Activated CD8-positive, alpha-beta T cell treated with anti-CD3 and anti-CD28 coated beads for 36 hours (primary cell): ENCODE measurements at regions of chr5 and their contacts with region 1.

Region 1: DNA sequence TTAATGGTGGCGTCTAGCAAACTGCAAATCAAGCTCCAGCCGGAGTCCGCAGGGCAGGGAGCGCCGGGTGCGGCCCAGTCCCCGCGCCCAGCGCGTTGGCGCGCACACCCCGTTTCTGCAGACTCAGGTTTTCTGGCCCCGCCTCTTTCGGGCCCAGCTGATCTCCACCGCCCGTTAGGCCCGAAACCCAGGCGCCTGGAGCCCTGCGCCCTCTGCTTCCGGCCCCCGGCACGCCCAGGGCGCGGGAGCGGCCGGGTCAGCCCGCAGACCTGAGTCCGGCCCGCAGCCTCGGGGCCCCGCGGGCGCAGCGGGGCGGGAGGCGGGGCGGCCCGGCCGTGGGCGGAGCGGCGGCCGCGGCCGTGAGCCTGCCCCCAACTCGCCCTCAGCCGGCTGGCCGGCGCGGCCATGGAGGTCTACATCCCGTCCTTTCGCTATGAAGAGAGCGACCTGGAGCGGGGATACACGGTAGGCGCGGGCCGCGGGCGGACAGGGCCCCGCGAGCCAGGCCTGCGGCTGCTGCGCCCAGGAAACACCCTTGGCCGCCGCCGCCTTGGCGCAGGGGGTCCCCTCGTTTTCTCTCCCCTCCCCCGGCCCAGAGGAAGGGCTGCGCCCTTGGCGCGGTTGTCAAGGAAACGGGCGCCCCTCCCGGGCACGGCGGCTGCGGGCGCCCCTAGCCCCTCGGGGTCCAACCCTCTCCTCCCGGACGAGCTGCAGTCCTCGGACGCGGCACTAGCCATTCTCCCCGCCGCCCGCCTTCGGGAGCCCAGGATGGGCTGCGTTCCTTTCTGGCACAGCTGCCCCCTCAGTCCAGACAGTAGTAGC is at the start of gene SNX24:
- DNase-seq: peak; percentile 77
- ATAC-seq: peak; percentile 90
- H3K4me3 Mint-ChIP-seq: peak within 1 kb of the TSS; percentile 81
- H3K27ac Mint-ChIP-seq: peak within 1 kb of the TSS; percentile 36
- H3K4me1 Mint-ChIP-seq: peaks cover 14% of the 10 kb centered on the region
- H3K27me3 Mint-ChIP-seq: peaks cover 3% of the 10 kb centered on the region
- CTCF ChIP-seq: no peak
- total RNA-seq, gene SNX24: 2.0 to 2.3 TPM

Region 2: DNA sequence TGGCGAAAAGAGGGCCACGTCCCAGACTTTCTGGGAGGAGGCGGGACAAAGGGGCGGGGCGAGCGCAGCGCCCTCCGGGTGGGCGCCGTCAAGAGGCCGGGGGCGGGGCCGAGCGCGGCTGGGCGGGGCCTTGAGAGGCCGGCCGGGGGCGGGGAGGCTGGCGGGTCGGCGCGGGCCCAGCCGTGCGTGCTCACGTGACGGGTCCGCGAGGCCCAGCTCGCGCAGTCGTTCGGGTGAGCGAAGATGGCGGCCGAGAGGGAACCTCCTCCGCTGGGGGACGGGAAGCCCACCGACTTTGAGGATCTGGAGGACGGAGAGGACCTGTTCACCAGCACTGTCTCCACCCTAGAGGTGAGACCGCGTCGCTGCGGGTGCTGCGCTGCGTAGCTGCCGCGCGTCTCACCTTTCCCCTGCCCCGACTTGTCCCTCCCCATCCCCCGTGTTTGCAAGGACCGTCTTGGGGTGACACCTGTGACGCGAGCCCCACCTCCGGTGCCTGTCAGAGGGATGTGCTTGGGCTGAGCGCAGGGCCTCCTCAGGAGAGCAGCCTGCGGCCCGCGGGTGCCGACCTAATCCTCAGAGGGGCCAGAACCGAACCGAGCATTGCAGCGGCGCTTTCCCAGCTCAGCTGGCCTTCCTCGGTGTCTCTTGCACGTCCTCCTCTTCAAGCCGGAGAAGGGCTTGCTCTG is 70.4 kb before region 1 on chr5 and contains the start of gene SNX2:
- CTCF ChIA-PET with region 1: interaction called, 4 read pairs
- POLR2A ChIA-PET with region 1: interaction called, 5 read pairs
- intact Hi-C with region 1: loop called (anchors 10 kb)
- DNase-seq: peak; percentile 93
- ATAC-seq: peak; percentile 94
- H3K4me3 Mint-ChIP-seq: peak within 1 kb of the TSS; percentile 91
- H3K27ac Mint-ChIP-seq: peak within 1 kb of the TSS; percentile 87
- H3K4me1 Mint-ChIP-seq: peaks cover 26% of the 10 kb centered on the region
- H3K27me3 Mint-ChIP-seq: no peaks in the 10 kb centered on the region
- CTCF ChIP-seq: peak; percentile 39
- total RNA-seq, gene SNX2: 42.0 to 48.3 TPM

Region 3: GRCh38 chr5:122937914-122938313 is 92.5 kb after region 1 on chr5:
- CTCF ChIA-PET with region 1: no interaction called
- POLR2A ChIA-PET with region 1: no interaction called
- intact Hi-C with region 1: no loop called
- DNase-seq: no peak
- ATAC-seq: no peak
- H3K4me3 Mint-ChIP-seq: no peak overlapping the region
- H3K27ac Mint-ChIP-seq: no peak overlapping the region
- H3K4me1 Mint-ChIP-seq: no peaks in the 10 kb centered on the region
- H3K27me3 Mint-ChIP-seq: peaks cover 2% of the 10 kb centered on the region
- CTCF ChIP-seq: no peak